PC-9 (cell line): ENCODE measurements at regions of chr6 and their contacts with region 1.

Region 1: DNA sequence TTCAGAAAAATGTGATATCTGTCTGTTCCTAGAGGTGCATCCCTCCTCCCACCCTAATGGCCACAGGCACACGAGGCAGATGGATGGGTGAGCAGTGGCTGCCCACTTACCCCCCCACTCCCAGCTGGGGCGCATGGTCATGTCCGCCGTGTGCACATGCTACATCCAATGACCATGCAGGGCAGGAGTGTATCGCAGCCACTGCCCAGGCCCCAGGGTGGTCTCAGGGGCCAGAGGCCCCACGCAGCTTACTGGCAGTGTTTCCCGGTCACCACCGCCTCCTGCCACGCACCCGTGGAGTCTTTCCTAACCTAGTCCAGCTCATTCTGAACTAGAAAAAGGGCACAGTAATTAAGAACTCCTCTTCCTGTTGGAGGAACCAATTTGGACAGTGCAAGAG is 11.7 kb upstream of the HTR1B start:
- DNase-seq: no peak
- H3K4me3 ChIP-seq: no peak overlapping the region
- H3K27ac ChIP-seq: no peak overlapping the region
- H3K4me1 ChIP-seq: no peaks in the 10 kb centered on the region
- H3K27me3 ChIP-seq: no peaks in the 10 kb centered on the region
- CTCF ChIP-seq: no peak

Region 2: GRCh38 chr6:77021232-77021631 is 453.7 kb before region 1 on chr6:
- CTCF ChIA-PET with region 1: no interaction called
- POLR2A ChIA-PET with region 1: interaction called, 13 read pairs
- intact Hi-C with region 1: no loop called
- DNase-seq: no peak
- H3K4me3 ChIP-seq: no peak overlapping the region
- H3K27ac ChIP-seq: no peak overlapping the region
- H3K4me1 ChIP-seq: no peaks in the 10 kb centered on the region
- H3K27me3 ChIP-seq: no peaks in the 10 kb centered on the region
- CTCF ChIP-seq: no peak

Region 3: GRCh38 chr6:77492530-77492929 is 17.6 kb after region 1 on chr6:
- CTCF ChIA-PET with region 1: no interaction called
- POLR2A ChIA-PET with region 1: no interaction called
- intact Hi-C with region 1: no loop called
- DNase-seq: no peak
- H3K4me3 ChIP-seq: no peak overlapping the region
- H3K27ac ChIP-seq: no peak overlapping the region
- H3K4me1 ChIP-seq: no peaks in the 10 kb centered on the region
- H3K27me3 ChIP-seq: no peaks in the 10 kb centered on the region
- CTCF ChIP-seq: no peak